ENCODE measurements at regions of chr12 and their contacts with region 1.

Region 1: GRCh38 chr12:12008931-12009611 is 61.7 kb upstream of the BCL2L14 start:
- DNase-seq: peak; percentile 84
- ATAC-seq: peak; percentile 61
- H3K4me3 Mint-ChIP-seq: peak overlapping the region; percentile 65
- H3K27ac Mint-ChIP-seq: peak overlapping the region; percentile 87
- H3K4me1 Mint-ChIP-seq: peaks cover 70% of the 10 kb centered on the region
- H3K27me3 Mint-ChIP-seq: peaks cover 2% of the 10 kb centered on the region
- CTCF ChIP-seq: peak; percentile 33

Region 2: GRCh38 chr12:11648831-11649702 is 360.0 kb before region 1 on chr12 and contains the start of gene ETV6:
- CTCF ChIA-PET with region 1: interaction called, 5 read pairs
- POLR2A ChIA-PET with region 1: interaction called, 9 read pairs
- intact Hi-C with region 1: loop called (anchors 2 kb)
- DNase-seq: peak; percentile 85
- ATAC-seq: peak; percentile 52
- H3K4me3 Mint-ChIP-seq: peak within 1 kb of the TSS; percentile 86
- H3K27ac Mint-ChIP-seq: peak within 1 kb of the TSS; percentile 95
- H3K4me1 Mint-ChIP-seq: peaks cover 25% of the 10 kb centered on the region
- H3K27me3 Mint-ChIP-seq: no peaks in the 10 kb centered on the region
- CTCF ChIP-seq: no peak
- total RNA-seq, gene ETV6: 20.5 to 22.7 TPM

Region 3: DNA sequence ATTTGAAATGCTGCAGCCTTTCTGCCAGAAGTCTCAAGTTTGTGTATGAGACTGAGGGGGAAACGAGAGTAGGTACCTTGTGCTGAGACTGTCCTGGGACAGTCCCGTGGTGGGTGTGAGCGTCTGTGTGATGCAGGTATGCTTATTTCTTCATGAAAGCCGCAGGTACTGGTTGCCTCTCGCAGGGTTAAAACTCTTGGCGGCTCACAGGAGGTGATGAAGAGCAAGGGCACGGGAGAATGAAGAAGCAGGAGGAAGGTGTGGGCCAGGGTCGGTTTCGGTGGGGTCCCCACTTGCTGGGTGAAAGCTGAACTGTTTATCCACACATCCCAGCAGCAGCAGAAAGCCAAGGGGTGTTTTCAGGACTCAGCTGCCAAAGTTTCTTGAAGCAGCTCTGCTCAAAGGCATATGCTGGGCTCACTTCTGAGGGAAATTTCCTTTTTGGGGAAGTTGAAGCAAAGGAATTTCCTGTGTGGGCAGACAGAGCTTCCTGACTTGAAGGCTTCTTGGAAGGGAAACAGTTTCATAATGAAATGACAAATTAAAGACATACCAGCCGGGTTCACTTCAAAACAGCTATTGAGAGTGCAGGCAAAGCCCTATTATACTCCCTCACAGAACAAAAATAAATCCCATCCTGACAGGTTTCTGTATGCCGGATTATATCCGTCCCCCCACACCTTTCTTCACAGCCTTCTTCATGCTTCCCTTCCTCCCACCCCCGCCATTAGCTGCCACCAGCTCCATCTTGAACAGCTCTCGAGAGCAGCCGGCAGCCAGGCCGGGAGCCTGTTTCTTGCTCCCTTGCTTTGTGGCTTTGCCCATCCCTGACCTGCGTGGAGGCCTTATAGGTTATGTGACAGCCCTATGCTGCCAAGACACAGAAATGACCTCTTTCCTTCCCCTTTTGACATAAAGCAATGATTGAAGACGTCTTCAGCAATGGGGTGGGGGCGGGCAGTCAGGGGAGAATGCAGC is 243.0 kb before region 1 on chr12:
- CTCF ChIA-PET with region 1: interaction called, 3 read pairs
- POLR2A ChIA-PET with region 1: no interaction called
- intact Hi-C with region 1: loop called (anchors 5 kb)
- DNase-seq: peak; percentile 91
- ATAC-seq: peak; percentile 96
- H3K4me3 Mint-ChIP-seq: peak overlapping the region; percentile 41
- H3K27ac Mint-ChIP-seq: peak overlapping the region; percentile 85
- H3K4me1 Mint-ChIP-seq: peaks cover 93% of the 10 kb centered on the region
- H3K27me3 Mint-ChIP-seq: no peaks in the 10 kb centered on the region
- CTCF ChIP-seq: no peak

Region 4: DNA sequence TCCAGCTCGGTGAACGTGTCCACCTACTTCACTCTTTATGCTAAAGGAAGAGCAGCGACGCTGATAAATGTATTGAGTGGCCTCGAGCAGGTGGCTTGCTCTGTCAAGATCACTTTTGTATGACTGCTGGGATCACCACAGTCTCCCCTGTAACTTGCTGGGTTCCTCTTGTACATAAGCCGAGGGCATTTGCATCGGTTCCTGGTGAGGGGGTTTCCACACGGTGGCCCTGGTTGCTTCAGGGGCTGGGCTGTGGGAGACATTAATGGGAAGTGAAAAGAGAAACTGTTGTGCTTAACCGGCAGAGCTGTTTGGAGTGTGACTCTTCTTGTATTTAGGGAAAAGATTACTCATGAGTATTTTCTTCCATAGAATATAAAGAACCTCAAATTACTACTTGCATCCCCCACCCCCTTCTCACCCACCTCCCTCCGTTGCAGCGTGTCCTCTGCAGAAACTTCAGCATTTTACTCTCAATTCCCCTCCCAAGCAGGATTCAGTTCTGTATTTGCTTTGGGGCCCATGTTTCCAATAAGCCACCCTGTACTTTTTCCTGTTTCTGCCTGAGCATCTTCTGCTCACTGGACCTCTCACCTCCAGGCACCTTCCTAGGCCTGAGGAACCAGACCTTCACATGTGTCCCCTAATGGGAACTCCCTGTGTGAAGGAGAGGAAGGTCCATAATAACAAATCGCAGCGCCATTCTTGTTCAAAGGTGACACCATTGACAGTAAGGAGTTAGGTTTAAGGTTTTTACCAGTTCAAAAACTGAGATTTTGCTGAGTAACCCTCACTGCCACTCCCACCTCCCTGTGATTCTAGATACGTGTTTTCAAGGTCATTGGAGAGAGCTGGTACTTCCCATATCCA is 172.6 kb before region 1 on chr12:
- CTCF ChIA-PET with region 1: interaction called, 3 read pairs
- POLR2A ChIA-PET with region 1: no interaction called
- intact Hi-C with region 1: loop called (anchors 5 kb)
- DNase-seq: peak; percentile 77
- ATAC-seq: peak; percentile 95
- H3K4me3 Mint-ChIP-seq: no peak overlapping the region
- H3K27ac Mint-ChIP-seq: peak overlapping the region; percentile 78
- H3K4me1 Mint-ChIP-seq: peaks cover 58% of the 10 kb centered on the region
- H3K27me3 Mint-ChIP-seq: no peaks in the 10 kb centered on the region
- CTCF ChIP-seq: no peak

Region 5: DNA sequence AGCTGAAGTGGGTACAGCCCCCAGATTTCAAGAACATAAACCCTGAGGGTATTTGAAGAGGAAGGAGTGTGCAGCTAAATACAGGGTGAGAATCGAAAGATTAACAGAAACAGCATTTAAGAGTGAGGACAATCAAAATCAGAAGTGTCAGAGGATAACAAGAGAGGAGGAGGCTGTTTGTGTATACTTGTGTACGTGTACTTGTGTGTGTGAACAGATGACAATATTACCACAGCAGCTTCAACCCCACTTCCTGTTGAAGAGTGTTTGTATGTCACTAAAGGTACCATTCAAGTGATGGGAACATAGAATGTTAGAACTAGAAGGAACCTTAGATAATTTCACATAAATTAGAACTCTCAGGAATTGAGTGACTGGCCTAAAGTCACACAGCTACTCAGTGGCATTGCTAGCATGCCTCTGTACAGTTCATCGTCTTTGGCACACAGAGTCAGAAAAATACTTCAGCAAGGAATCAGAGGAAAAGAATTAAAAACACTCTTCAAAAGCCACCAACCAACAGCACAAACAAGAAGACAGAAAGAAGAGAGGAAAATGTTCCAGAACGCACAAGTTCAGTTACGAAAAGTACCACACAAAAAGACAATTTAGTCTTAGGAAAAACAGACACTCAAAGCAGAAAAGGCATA is 102.7 kb before region 1 on chr12:
- CTCF ChIA-PET with region 1: no interaction called
- POLR2A ChIA-PET with region 1: interaction called, 11 read pairs
- intact Hi-C with region 1: loop called (anchors 2 kb)
- DNase-seq: no peak
- ATAC-seq: no peak
- H3K4me3 Mint-ChIP-seq: no peak overlapping the region
- H3K27ac Mint-ChIP-seq: no peak overlapping the region
- H3K4me1 Mint-ChIP-seq: peaks cover 34% of the 10 kb centered on the region
- H3K27me3 Mint-ChIP-seq: peaks cover 4% of the 10 kb centered on the region
- CTCF ChIP-seq: no peak

Region 6: GRCh38 chr12:11981121-11981733 is 27.8 kb before region 1 on chr12:
- CTCF ChIA-PET with region 1: interaction called, 8 read pairs
- POLR2A ChIA-PET with region 1: interaction called, 13 read pairs
- intact Hi-C with region 1: loop called (anchors 1 kb)
- DNase-seq: peak; percentile 63
- ATAC-seq: peak; percentile 80
- H3K4me3 Mint-ChIP-seq: peak overlapping the region; percentile 48
- H3K27ac Mint-ChIP-seq: peak overlapping the region; percentile 99
- H3K4me1 Mint-ChIP-seq: peaks cover 47% of the 10 kb centered on the region
- H3K27me3 Mint-ChIP-seq: no peaks in the 10 kb centered on the region
- CTCF ChIP-seq: no peak

Measured in activated CD8-positive, alpha-beta T cell treated with anti-CD3 and anti-CD28 coated beads for 36 hours (primary cell).